ENCODE measurements at regions of chr1 and their contacts with region 1.

Region 1: DNA sequence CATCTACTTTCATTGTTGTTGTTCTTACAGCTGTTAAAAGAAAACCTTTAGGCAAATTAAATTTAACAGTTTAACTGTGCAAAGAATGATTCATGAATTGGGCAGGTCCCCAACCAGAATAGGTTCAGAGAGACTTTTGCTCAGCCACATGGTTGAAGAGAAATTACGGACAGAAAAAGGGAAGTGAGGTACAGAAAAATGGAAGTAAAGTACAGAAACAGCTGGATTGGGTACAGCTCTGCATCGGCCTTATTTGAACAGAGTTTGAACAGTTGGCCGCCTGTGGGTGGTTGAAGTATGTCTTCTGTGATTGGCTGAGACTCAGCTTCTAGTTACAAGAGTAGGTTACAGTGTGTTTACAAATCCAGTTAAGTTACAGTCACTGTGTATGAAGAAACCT is 210.1 kb downstream of the FGGY start:
- DNase-seq: peak; percentile 30
- H3K4me3 ChIP-seq: no peak overlapping the region
- H3K27ac ChIP-seq: no peak overlapping the region
- H3K4me1 ChIP-seq: peaks cover 14% of the 10 kb centered on the region
- H3K27me3 ChIP-seq: no peaks in the 10 kb centered on the region
- CTCF ChIP-seq: no peak
- POLR2A ChIP-seq: no peak

Region 2: DNA sequence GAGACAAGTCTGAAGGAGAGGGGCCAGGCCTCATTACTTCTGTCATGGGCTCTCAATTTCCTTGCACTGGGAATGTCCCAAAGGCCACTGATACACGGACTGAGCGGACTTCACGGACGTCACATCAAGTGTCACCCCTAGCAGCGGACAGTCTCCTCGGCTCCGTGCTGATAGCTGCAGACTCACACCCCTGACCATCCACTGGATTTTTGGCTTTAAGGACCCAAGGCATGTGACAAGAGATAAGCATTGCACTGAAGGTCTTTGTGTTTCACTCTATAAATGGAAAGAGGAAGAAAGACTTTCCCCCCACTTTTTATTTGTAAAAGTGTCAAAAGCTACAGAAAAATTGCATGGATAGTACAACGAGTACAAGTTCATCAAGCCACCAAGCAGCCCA is 410.5 kb before region 1 on chr1:
- intact Hi-C with region 1: loop called (anchors 5 kb)
- DNase-seq: no peak
- H3K4me3 ChIP-seq: no peak overlapping the region
- H3K27ac ChIP-seq: no peak overlapping the region
- H3K4me1 ChIP-seq: peaks cover 3% of the 10 kb centered on the region
- H3K27me3 ChIP-seq: no peaks in the 10 kb centered on the region
- CTCF ChIP-seq: no peak
- POLR2A ChIP-seq: no peak

Region 3: DNA sequence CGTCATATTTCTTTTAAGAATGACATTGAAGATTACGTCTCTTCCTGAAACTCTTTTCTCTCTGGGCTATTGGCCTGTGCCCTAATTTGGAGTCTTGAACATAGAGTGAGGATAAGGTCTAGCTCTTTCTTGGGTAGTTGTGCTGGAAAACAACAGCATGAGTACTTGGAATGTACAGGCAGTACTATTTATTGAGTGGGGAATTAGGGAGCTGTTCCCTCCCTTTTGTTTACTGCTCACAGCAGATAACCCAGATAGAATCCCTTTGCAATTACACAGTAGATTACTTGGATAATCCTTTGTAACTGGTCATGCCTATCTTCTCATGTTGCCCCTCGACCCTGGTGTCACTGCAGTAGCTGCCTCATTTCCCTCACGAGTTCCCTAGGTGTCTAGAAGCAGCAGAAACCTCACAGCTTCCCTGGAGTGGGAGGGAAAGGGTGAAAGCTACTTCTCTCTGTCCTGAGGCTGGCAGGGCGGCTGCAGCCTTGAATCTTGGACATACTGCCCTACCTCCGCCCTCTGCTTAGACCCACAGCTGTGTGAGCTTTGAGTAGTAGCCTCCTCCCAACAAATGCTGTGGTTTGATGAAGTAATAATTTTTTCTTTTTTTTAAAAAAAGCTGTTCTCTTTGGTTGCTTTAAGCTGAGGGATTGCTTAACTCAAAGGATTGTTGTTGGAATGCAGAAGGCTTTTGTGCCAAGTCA is 139.5 kb before region 1 on chr1:
- intact Hi-C with region 1: loop called (anchors 10 kb)
- DNase-seq: peak; percentile 83
- H3K4me3 ChIP-seq: no peak overlapping the region
- H3K27ac ChIP-seq: peak overlapping the region; percentile 63 to 81
- H3K4me1 ChIP-seq: peaks cover 17% of the 10 kb centered on the region
- H3K27me3 ChIP-seq: no peaks in the 10 kb centered on the region
- CTCF ChIP-seq: no peak
- POLR2A ChIP-seq: no peak

Measured in testis (tissue), 5 donors.